Lower leg skin (tissue), 4 donors: ENCODE measurements at regions of chr2 and their contacts with region 1.

Region 1: DNA sequence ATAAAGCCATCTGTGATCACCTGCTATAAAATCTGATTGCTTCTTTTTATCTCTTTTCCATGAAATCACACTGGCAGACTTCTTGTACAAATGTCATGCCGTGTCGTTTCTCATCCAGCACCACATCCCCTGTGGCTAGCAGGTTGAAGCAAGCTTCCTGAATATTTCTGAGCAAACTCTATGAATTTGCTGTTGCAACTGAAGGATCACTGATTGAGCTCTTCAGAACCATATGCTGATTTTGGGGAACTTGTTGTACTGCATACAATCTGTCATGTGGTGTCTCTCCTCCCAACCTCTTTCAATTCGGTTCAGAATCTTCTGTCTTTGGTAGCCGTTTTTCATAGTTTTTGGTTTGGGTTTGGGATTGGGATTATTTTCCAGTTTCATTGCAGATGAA is 57.7 kb upstream of the RBMS1 start:
- DNase-seq: no peak
- H3K4me3 ChIP-seq: no peak overlapping the region
- CTCF ChIP-seq: no peak
- POLR2A ChIP-seq: no peak

Region 2: GRCh38 chr2:159317392-159318088 is 1233.7 kb before region 1 on chr2:
- intact Hi-C with region 1: loop called (anchors 5 kb)
- DNase-seq: no peak
- H3K4me3 ChIP-seq: no peak overlapping the region
- CTCF ChIP-seq: no peak
- POLR2A ChIP-seq: no peak

Region 3: DNA sequence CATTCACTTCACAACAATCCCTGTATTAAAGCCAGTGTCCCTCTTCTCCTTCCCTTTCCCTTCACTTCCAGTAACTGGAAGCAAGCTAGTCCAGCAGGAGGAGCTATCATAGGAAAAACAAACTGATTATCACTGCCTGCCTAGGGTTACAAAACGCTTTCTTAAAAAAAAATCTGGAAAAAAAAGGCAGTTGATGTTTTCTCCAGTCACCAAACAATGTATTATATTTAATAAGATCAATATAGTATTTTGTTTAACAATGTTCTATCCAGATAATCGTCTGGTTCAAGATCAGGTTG is 272.4 kb before region 1 on chr2:
- intact Hi-C with region 1: no loop called
- DNase-seq: no peak
- H3K4me3 ChIP-seq: no peak overlapping the region
- CTCF ChIP-seq: no peak
- POLR2A ChIP-seq: no peak

Region 4: DNA sequence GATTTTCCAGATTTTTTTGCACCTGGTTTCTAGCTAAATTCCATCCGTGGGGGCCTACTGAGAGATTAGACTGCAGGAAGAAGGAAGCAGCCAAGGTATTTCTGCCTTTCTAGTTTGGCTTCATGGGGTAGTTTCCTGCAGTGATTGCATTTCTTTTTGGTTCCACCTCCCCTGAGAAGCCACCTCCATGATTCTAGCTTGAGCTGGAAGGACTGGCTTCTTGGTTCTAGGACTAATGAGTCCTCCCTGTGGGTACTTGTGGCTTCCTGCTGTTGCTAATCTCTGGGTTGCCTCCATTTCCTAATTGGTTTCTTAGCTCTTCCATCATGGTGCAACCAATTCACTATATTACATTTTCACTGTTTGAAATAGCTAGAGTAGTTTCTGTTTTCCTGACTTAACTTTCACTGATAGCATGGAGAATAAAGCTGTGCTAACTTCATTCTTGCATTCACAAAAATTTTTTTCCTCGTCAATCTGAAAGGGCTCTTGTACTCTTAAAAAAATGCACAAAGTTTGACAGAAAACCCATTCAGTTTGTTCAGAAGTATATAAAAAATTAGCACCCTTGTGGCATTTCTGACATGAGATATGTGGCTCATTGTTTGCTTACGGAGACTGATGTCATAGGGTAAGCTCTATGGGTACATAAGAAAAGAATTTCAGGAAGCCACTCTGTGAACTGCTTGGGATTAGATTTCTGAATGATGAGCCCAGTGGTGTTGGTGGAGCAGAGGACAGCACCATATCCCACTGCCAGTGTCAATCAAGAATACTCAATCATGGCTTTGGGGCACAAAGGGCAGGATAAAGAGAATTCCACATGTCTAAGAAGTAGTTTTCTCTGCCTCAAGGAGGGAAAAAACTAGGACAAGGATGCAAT is 185.1 kb after region 1 on chr2:
- intact Hi-C with region 1: no loop called
- DNase-seq: no peak
- H3K4me3 ChIP-seq: no peak overlapping the region
- CTCF ChIP-seq: no peak
- POLR2A ChIP-seq: no peak